GM12878 (cell line): ENCODE measurements at regions of chr9 and their contacts with region 1.

Region 1: GRCh38 chr9:16191691-16192402 is 639.0 kb downstream of the CCDC171 start:
- DNase-seq: no peak
- ATAC-seq: peak; percentile 100
- H3K4me3 ChIP-seq: no peak overlapping the region
- H3K27ac ChIP-seq: no peak overlapping the region
- H3K4me1 ChIP-seq: no peaks in the 10 kb centered on the region
- H3K27me3 ChIP-seq: no peaks in the 10 kb centered on the region; a peak in 1 of 4 replicates
- CTCF ChIP-seq: peak; percentile 61 to 84 (median 72)
- EP300 ChIP-seq: no peak
- POLR2A ChIP-seq: no peak
- RAD21 ChIP-seq: peak; percentile 72

Region 2: GRCh38 chr9:16309469-16310271 is 117.8 kb after region 1 on chr9:
- CTCF ChIA-PET with region 1: no interaction called
- POLR2A ChIA-PET with region 1: no interaction called
- RAD21 ChIA-PET with region 1: no interaction called
- SMC1A ChIA-PET with region 1: no interaction called
- in situ Hi-C with region 1: no loop called
- intact Hi-C with region 1: loop called (anchors 5 kb)
- DNase-seq: no peak
- ATAC-seq: no peak
- H3K4me3 ChIP-seq: no peak overlapping the region
- H3K27ac ChIP-seq: no peak overlapping the region
- H3K4me1 ChIP-seq: no peaks in the 10 kb centered on the region
- H3K27me3 ChIP-seq: no peaks in the 10 kb centered on the region
- CTCF ChIP-seq: no peak
- EP300 ChIP-seq: no peak
- POLR2A ChIP-seq: no peak
- RAD21 ChIP-seq: no peak

Region 3: DNA sequence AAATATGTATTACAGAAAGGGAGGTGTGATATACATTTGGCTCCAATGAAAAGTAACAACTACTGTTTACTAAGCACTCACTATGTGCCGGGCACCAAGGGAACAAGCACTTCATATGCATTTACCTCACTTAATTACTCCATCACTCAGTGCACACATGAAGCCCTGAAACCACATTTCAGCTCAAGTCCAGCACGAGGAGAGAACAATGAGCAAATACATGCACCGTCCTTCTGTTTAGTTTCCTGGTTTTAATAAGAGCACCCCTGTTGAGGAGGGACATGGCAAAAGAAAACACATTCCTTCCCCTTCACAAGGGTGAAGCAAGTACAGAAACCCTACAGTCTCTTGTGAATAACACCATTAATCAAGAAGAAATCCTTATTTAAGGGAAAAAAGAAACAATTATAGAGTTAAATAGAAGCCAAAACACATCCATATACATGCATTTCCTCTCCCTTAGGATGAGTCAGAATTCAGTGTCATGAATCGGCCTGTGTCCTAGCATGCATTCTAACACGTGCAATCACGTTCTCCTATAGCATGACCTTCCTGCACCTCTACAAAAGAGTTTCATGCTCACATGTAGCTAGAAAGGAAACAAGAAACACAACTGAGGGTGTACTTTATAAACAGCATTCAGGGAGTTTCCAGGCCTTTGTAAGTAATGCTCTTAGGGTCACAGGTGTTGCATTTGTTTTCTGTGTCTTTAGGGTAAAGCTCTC is 267.0 kb after region 1 on chr9:
- CTCF ChIA-PET with region 1: no interaction called
- POLR2A ChIA-PET with region 1: no interaction called
- RAD21 ChIA-PET with region 1: no interaction called
- SMC1A ChIA-PET with region 1: no interaction called
- in situ Hi-C with region 1: no loop called
- intact Hi-C with region 1: loop called (anchors 5 kb)
- DNase-seq: peak; percentile 76
- ATAC-seq: peak; percentile 80
- H3K4me3 ChIP-seq: no peak overlapping the region
- H3K27ac ChIP-seq: peak overlapping the region; percentile 29
- H3K4me1 ChIP-seq: peaks cover 8% of the 10 kb centered on the region; the same call in 1 of the 2 replicates
- H3K27me3 ChIP-seq: no peaks in the 10 kb centered on the region
- CTCF ChIP-seq: no peak
- EP300 ChIP-seq: no peak; a peak in 2 of 4 replicates
- POLR2A ChIP-seq: no peak
- RAD21 ChIP-seq: no peak

Region 4: GRCh38 chr9:16653491-16654399 is 461.9 kb after region 1 on chr9:
- CTCF ChIA-PET with region 1: no interaction called
- POLR2A ChIA-PET with region 1: no interaction called
- RAD21 ChIA-PET with region 1: no interaction called
- SMC1A ChIA-PET with region 1: no interaction called
- in situ Hi-C with region 1: no loop called
- intact Hi-C with region 1: loop called (anchors 5 kb)
- DNase-seq: no peak
- ATAC-seq: peak; percentile 26; the same call in 2 of the 3 replicates
- H3K4me3 ChIP-seq: no peak overlapping the region
- H3K27ac ChIP-seq: no peak overlapping the region
- H3K4me1 ChIP-seq: no peaks in the 10 kb centered on the region
- H3K27me3 ChIP-seq: no peaks in the 10 kb centered on the region
- CTCF ChIP-seq: no peak
- EP300 ChIP-seq: no peak
- POLR2A ChIP-seq: no peak
- RAD21 ChIP-seq: no peak

Region 5: GRCh38 chr9:16828340-16829281 is 636.8 kb after region 1 on chr9:
- CTCF ChIA-PET with region 1: no interaction called
- POLR2A ChIA-PET with region 1: no interaction called
- RAD21 ChIA-PET with region 1: no interaction called
- SMC1A ChIA-PET with region 1: no interaction called
- in situ Hi-C with region 1: no loop called
- intact Hi-C with region 1: loop called (anchors 10 kb)
- DNase-seq: no peak
- ATAC-seq: peak; percentile 24; the same call in 2 of the 3 replicates
- H3K4me3 ChIP-seq: no peak overlapping the region
- H3K27ac ChIP-seq: no peak overlapping the region
- H3K4me1 ChIP-seq: no peaks in the 10 kb centered on the region
- H3K27me3 ChIP-seq: no peaks in the 10 kb centered on the region
- CTCF ChIP-seq: no peak
- EP300 ChIP-seq: no peak
- POLR2A ChIP-seq: no peak
- RAD21 ChIP-seq: no peak

Region 6: GRCh38 chr9:17462869-17463464 is 1271.1 kb after region 1 on chr9:
- CTCF ChIA-PET with region 1: no interaction called
- POLR2A ChIA-PET with region 1: no interaction called
- RAD21 ChIA-PET with region 1: no interaction called
- SMC1A ChIA-PET with region 1: no interaction called
- in situ Hi-C with region 1: no loop called
- intact Hi-C with region 1: loop called (anchors 5 kb)
- DNase-seq: no peak
- ATAC-seq: peak; percentile 66
- H3K4me3 ChIP-seq: no peak overlapping the region
- H3K27ac ChIP-seq: no peak overlapping the region
- H3K4me1 ChIP-seq: no peaks in the 10 kb centered on the region
- H3K27me3 ChIP-seq: no peaks in the 10 kb centered on the region
- CTCF ChIP-seq: peak; percentile 55 to 73 (median 58); a peak in 5 of 6 replicates
- EP300 ChIP-seq: no peak
- POLR2A ChIP-seq: no peak
- RAD21 ChIP-seq: peak; percentile 81